ENCODE measurements at regions of chr14 and their contacts with region 1.

Region 1: GRCh38 chr14:93206793-93207467 is at the starts of genes GON7 and UBR7:
- DNase-seq: peak; percentile 84 to 91 (median 85)
- H3K4me3 ChIP-seq: peak within 1 kb of the TSS; percentile 96
- H3K4me3 Mint-ChIP-seq: peak within 1 kb of the TSS; percentile 95 to 100 (median 98)
- H3K27ac ChIP-seq: peak within 1 kb of the TSS; percentile 78
- H3K27ac Mint-ChIP-seq: peak within 1 kb of the TSS; percentile 88 to 99 (median 96)
- H3K4me1 ChIP-seq: peaks cover 22% of the 10 kb centered on the region
- H3K4me1 Mint-ChIP-seq: peaks cover 42 to 60% (median 59%) of the 10 kb centered on the region in 3 donors
- H3K27me3 ChIP-seq: no peaks in the 10 kb centered on the region
- H3K27me3 Mint-ChIP-seq: no peaks in the 10 kb centered on the region
- total RNA-seq, gene GON7: 19.7 to 19.8 TPM
- total RNA-seq, gene UBR7: 39.4 to 42.3 TPM

Region 2: DNA sequence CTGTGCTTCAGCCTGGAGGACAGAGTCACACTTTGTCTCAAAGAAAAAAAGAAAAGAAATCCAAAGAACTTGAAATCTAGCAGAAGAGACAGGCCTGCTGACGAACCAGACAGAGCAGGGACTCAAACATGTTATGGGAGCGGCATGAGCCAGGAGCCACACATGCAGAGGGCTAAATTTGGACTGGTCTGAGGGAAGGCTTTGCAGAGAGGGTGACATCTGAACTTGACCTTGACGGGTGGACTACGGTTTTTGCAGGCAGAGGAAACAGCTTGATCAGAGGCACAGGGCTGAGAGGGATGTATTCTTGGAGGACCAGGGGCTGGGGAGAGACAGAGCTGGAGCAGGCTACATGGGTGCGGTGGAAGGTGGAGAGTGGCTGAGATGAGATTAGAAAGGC is 904.4 kb before region 1 on chr14:
- CTCF ChIA-PET with region 1: no interaction called
- POLR2A ChIA-PET with region 1: no interaction called
- DNase-seq: no peak
- H3K4me3 ChIP-seq: no peak overlapping the region
- H3K4me3 Mint-ChIP-seq: no peak overlapping the region
- H3K27ac ChIP-seq: no peak overlapping the region
- H3K27ac Mint-ChIP-seq: no peak overlapping the region
- H3K4me1 ChIP-seq: no peaks in the 10 kb centered on the region
- H3K4me1 Mint-ChIP-seq: no peaks in the 10 kb centered on the region
- H3K27me3 ChIP-seq: no peaks in the 10 kb centered on the region
- H3K27me3 Mint-ChIP-seq: peaks cover 10 to 18% of the 10 kb centered on the region in 2 donors

Region 3: GRCh38 chr14:93160353-93160801 is 46.6 kb before region 1 on chr14:
- CTCF ChIA-PET with region 1: no interaction called
- POLR2A ChIA-PET with region 1: no interaction called
- DNase-seq: no peak
- H3K4me3 ChIP-seq: no peak overlapping the region
- H3K4me3 Mint-ChIP-seq: no peak overlapping the region
- H3K27ac ChIP-seq: no peak overlapping the region
- H3K27ac Mint-ChIP-seq: no peak overlapping the region
- H3K4me1 ChIP-seq: no peaks in the 10 kb centered on the region
- H3K4me1 Mint-ChIP-seq: no peaks in the 10 kb centered on the region
- H3K27me3 ChIP-seq: no peaks in the 10 kb centered on the region
- H3K27me3 Mint-ChIP-seq: no peaks in the 10 kb centered on the region

Region 4: GRCh38 chr14:93184388-93185353 is 22.3 kb before region 1 on chr14 and contains the starts of genes LYSET and MOAP1:
- CTCF ChIA-PET with region 1: interaction called, 30 read pairs
- POLR2A ChIA-PET with region 1: interaction called, 36 read pairs
- DNase-seq: peak; percentile 89 to 95 (median 90)
- H3K4me3 ChIP-seq: peak within 1 kb of the TSS; percentile 95
- H3K4me3 Mint-ChIP-seq: peak within 1 kb of the TSS; percentile 91 to 97 (median 94)
- H3K27ac ChIP-seq: peak within 1 kb of the TSS; percentile 98
- H3K27ac Mint-ChIP-seq: peak within 1 kb of the TSS; percentile 93 to 99 (median 98)
- H3K4me1 ChIP-seq: peaks cover 31% of the 10 kb centered on the region
- H3K4me1 Mint-ChIP-seq: peaks cover 33 to 47% (median 45%) of the 10 kb centered on the region in 3 donors
- H3K27me3 ChIP-seq: no peaks in the 10 kb centered on the region
- H3K27me3 Mint-ChIP-seq: no peaks in the 10 kb centered on the region
- total RNA-seq, gene LYSET: 19.3 to 20.5 TPM
- total RNA-seq, gene MOAP1: 16.7 to 17.4 TPM

Region 5: DNA sequence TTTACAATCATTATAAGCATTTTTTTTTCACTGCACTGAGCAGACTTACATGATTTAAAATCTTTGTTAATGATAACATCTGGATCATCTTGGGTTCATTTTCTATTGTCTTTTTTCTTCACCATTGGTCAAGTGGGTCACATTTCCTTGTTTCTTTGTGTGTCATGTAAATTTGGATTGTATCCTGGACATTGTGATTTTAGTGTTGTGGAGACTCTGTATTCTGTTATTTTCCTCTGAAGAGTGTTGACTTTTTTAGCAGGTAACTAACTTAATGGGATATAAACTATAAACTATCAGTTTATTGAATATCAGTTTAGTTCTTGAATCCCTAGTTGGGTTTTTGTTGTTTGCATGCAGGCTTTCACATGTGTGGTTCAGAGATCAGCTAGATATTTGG is 219.8 kb after region 1 on chr14:
- CTCF ChIA-PET with region 1: no interaction called
- POLR2A ChIA-PET with region 1: no interaction called
- DNase-seq: no peak
- H3K4me3 ChIP-seq: no peak overlapping the region
- H3K4me3 Mint-ChIP-seq: no peak overlapping the region
- H3K27ac ChIP-seq: no peak overlapping the region
- H3K27ac Mint-ChIP-seq: no peak overlapping the region
- H3K4me1 ChIP-seq: no peaks in the 10 kb centered on the region
- H3K4me1 Mint-ChIP-seq: no peaks in the 10 kb centered on the region
- H3K27me3 ChIP-seq: no peaks in the 10 kb centered on the region
- H3K27me3 Mint-ChIP-seq: peaks cover 26 to 28% of the 10 kb centered on the region in 2 donors

Measured in CD8-positive, alpha-beta memory T cell (primary cell).